Right ventricle myocardium superior (tissue), 1 donor: ENCODE measurements at regions of chr20 and their contacts with region 1.

Region 1: GRCh38 chr20:38645980-38646858 is 44.6 kb downstream of the ARHGAP40 start:
- DNase-seq: peak; percentile 81
- ATAC-seq: peak; percentile 96

Region 2: DNA sequence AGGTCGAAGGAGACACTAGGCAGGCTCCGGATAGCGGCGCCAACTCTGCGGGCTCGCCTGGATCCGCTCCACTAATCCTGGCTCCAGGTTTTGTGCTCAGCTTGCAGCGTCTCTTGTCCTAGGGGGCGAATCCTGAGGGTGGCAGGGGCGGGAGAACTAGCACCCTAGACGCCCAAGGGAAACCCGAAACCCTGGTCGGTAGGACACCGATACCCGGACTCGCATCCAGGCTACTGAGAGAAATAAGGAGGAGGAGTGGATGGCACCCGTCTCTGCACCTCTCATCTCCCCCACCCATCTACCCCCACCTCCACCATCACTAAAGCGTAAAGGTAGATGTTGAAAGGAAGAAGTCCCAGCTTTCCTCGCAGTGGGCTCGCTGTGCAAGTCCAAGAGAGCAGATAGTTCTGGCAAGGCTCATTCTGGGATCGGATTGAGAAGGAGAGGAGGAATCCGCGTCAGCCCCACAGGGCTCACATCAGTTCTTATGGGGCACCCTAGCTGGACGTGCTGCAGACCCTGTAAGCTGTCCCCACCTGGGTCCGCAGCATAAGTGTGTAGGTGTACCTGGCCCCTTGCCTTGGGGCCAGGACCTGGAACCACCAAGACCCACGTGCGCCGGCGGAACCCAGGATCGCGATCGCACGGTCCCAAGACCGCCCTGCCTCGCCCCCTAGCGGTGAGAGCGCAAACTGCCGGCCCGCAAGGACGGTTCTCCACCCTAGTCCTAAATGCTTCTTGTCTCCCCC is 84.9 kb after region 1 on chr20:
- intact Hi-C with region 1: loop called (anchors 5 kb)
- DNase-seq: peak; percentile 80
- ATAC-seq: peak; percentile 90

Region 3: DNA sequence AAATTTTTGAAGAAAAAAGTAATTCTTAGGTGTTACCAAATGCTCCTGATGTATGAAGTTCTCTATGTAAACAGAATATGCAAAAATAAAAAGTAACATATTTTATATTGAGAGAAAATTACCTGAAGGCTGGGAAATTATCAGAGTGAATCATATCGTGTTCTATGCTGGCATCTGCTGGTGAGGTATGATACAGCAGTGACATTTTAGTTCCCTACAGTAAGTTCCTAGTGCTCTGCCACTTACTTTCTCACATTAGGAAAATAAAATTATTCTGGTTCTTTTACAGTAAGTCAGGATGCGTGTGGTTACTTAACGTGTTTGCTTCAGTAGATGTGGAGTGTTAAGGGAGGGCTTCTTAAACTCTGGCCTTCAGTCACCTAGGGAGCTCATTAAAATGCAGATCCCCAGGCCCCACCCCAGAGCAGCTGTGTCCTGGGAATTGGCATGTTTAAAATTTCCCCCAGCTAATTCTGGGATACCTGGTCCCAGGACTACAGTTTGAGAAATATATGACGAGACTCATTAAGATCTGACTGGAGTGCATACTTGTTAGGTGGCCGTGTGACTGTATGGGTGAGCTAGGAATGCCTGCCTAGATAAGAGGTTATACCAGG is 105.2 kb after region 1 on chr20:
- intact Hi-C with region 1: loop called (anchors 5 kb)
- DNase-seq: no peak
- ATAC-seq: no peak

Region 4: DNA sequence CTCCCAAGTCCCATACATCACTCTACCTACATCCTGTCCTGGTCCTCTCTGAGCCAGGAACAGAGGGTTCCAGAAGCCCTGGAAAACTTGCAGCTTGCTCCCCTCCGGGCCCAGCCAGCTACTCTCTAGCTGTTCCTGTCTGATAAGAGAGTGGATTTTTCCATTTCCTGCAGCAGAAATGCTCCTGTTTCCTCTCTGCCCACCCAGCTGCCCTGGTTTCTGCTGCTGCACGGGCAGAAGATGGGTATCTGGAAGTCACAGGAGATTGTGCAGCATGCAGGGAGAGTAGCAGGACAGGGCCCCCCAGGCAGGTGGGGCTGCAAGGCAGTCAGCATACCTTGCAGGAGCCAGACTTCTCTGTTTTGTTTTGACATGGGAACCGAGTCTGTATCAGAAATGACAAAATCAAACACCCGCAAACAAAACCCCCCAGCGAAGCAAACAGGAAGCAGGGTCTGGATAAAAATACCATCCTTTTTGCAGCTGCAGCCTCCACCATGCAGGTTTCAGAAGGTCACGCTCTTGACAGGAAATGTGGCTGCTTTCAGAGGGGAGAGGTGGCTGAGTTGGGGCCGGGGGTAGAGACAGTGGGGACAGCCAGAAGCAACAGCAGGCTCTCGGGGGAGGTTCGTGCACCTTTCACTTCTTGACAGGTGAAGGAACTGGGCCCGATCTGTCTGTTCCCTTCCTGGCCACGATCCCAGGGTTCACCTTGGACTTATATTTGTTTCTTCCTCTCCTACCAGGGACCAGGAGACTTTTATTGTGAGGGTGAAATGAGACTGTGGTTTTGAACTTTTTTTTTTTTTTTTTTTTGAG is 229.2 kb after region 1 on chr20:
- intact Hi-C with region 1: no loop called
- DNase-seq: no peak
- ATAC-seq: peak; percentile 49

Region 5: DNA sequence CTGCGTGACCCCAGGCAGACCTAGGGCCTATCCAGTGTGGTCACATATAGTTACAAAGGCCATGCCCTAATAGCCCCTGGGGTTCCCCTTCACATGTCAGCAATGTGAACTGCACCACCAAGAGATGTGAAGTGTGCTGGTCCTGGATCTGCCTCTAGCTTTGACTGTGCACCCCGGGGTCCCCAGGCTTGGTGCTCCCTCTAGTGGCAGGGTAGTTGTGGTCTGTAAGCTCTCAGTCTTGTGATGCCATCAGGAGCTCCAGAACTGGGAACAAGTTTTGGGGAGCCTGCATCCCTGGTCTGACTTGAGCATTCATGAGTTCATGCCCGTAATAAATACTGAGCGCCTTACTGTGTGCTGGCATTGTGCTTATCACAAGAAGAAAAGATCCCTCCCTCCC is 459.3 kb after region 1 on chr20:
- intact Hi-C with region 1: no loop called
- DNase-seq: no peak
- ATAC-seq: no peak